H1 (cell line): ENCODE measurements at regions of chr19 and their contacts with region 1.

Region 1: GRCh38 chr19:21141787-21142464 is at the start of gene ZNF431:
- DNase-seq: peak; percentile 84 to 87
- H3K4me3 ChIP-seq: peak within 1 kb of the TSS; percentile 90 to 93 (median 92)
- H3K27ac ChIP-seq: peak within 1 kb of the TSS; percentile 92
- H3K4me1 ChIP-seq: no peaks in the 10 kb centered on the region; a peak in 1 of 7 replicates
- H3K27me3 ChIP-seq: no peaks in the 10 kb centered on the region
- CTCF ChIP-seq: no peak; a peak in 1 of 4 replicates
- EP300 ChIP-seq: no peak
- POLR2A ChIP-seq: peak; percentile 84 to 98
- RAD21 ChIP-seq: no peak
- total RNA-seq, gene ZNF431: 43.2 and 47.3 TPM in 2 replicates

Region 2: DNA sequence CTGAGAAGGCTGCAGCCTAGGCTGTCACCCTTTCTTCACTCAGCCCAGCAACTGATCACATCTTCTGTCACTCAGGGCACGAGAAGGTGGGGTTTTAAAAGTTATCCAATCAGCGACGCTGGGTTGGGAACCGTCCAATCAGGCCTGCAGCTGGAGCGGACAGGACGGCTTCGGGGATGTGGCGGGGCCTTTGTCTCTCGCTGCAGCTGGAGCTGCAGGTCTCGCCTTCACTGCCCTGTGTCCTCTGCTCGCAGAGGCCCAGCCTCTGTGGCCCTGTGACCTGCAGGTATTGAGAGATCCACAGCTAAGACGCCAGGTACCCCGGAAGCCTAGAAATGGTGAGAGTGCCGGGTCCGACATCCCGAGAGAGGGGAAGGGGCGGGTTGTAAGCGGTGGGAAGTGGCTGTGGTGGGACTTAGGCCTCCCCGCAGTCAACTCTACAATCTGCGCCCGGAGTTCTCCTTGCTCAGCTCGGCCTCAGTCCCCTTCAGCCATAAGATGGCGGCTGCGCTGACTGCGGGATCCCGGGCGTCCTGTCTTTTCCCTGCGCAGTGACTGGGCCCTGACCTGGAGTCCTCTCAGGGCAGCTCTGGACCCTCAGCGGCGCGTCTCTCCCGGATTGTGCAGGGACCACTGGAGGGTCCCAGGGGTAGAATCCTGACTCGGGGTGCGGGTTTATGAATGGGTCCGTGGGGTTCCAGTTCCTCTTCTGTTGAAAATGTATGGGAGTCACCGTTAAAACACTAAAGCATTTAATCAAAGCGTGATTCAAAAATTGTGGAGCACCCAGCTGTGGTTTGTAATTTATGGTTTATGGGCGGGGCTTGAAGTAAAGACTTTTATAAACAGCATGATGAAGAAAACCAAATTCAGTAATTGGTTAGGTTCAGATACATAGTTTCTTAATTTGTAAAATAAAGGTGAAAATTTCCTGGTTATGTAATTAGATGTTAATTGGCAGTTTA is 59.6 kb before region 1 on chr19 and contains the start of gene ZNF714:
- CTCF ChIA-PET with region 1: no interaction called
- POLR2A ChIA-PET with region 1: interaction called, 11 read pairs
- DNase-seq: peak; percentile 86 to 91
- H3K4me3 ChIP-seq: peak within 1 kb of the TSS; percentile 83 to 97 (median 87)
- H3K27ac ChIP-seq: peak within 1 kb of the TSS; percentile 86
- H3K4me1 ChIP-seq: peaks cover 0 to 2% (median under 1%) of the 10 kb centered on the region in 4 experiments; a peak in 3 of 7 replicates
- H3K27me3 ChIP-seq: no peaks in the 10 kb centered on the region
- CTCF ChIP-seq: no peak
- EP300 ChIP-seq: no peak
- POLR2A ChIP-seq: peak; percentile 96 to 97
- RAD21 ChIP-seq: no peak
- total RNA-seq, gene ZNF714: 71.8 and 74.2 TPM in 2 replicates

Region 3: GRCh38 chr19:21110183-21110582 is 31.7 kb before region 1 on chr19:
- CTCF ChIA-PET with region 1: no interaction called
- POLR2A ChIA-PET with region 1: no interaction called
- DNase-seq: no peak
- H3K4me3 ChIP-seq: no peak overlapping the region
- H3K27ac ChIP-seq: no peak overlapping the region
- H3K4me1 ChIP-seq: no peaks in the 10 kb centered on the region
- H3K27me3 ChIP-seq: no peaks in the 10 kb centered on the region
- CTCF ChIP-seq: no peak
- EP300 ChIP-seq: no peak
- POLR2A ChIP-seq: no peak
- RAD21 ChIP-seq: no peak

Region 4: DNA sequence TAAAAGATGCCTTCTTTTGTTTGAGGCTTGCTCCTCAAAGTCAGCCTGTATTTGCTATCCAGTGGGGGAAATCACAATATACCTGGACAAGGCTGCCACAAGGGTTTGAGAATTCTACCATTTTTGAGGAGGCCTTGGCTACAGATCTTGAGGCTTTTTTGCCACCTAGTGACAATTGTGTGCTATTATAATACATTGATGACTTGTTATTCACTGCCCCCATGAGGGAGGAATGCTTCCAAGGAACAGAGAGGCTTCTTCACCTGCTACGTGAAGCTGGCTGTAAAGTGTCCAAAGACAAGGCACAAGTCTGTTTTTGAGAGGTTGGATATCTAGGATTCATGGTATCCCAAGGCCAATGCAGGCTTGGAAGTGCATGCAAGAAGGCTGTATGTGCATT is 114.8 kb after region 1 on chr19:
- CTCF ChIA-PET with region 1: no interaction called
- POLR2A ChIA-PET with region 1: no interaction called
- DNase-seq: peak in 1 of 2 experiments; percentile 25
- H3K4me3 ChIP-seq: no peak overlapping the region
- H3K27ac ChIP-seq: no peak overlapping the region
- H3K4me1 ChIP-seq: no peaks in the 10 kb centered on the region
- H3K27me3 ChIP-seq: no peaks in the 10 kb centered on the region
- CTCF ChIP-seq: peak in 2 of 3 experiments; percentile 73 to 99; a peak in 3 of 4 replicates
- EP300 ChIP-seq: no peak
- POLR2A ChIP-seq: no peak
- RAD21 ChIP-seq: peak; percentile 85 to 87